Gastrocnemius medialis (tissue), 4 donors: ENCODE measurements at regions of chr19 and their contacts with region 1.

Region 1: GRCh38 chr19:32971715-32972540 is at the starts of genes CEP89 and FAAP24:
- DNase-seq: peak; percentile 97 to 99
- ATAC-seq: peak; percentile 100
- H3K4me3 ChIP-seq: peak within 1 kb of the TSS; percentile 65 to 96 (median 84)
- H3K27ac ChIP-seq: peak within 1 kb of the TSS; percentile 67 to 82 (median 75)
- H3K4me1 ChIP-seq: peaks cover 8 to 13% of the 10 kb centered on the region in 2 donors
- H3K27me3 ChIP-seq: no peaks in the 10 kb centered on the region
- CTCF ChIP-seq: no peak
- POLR2A ChIP-seq: no peak
- total RNA-seq, gene CEP89: 3.4 to 20.9 (median 9.5) TPM
- total RNA-seq, gene FAAP24: 0.16 to 0.97 TPM in 2 of 4 donors, not detected in the others

Region 2: DNA sequence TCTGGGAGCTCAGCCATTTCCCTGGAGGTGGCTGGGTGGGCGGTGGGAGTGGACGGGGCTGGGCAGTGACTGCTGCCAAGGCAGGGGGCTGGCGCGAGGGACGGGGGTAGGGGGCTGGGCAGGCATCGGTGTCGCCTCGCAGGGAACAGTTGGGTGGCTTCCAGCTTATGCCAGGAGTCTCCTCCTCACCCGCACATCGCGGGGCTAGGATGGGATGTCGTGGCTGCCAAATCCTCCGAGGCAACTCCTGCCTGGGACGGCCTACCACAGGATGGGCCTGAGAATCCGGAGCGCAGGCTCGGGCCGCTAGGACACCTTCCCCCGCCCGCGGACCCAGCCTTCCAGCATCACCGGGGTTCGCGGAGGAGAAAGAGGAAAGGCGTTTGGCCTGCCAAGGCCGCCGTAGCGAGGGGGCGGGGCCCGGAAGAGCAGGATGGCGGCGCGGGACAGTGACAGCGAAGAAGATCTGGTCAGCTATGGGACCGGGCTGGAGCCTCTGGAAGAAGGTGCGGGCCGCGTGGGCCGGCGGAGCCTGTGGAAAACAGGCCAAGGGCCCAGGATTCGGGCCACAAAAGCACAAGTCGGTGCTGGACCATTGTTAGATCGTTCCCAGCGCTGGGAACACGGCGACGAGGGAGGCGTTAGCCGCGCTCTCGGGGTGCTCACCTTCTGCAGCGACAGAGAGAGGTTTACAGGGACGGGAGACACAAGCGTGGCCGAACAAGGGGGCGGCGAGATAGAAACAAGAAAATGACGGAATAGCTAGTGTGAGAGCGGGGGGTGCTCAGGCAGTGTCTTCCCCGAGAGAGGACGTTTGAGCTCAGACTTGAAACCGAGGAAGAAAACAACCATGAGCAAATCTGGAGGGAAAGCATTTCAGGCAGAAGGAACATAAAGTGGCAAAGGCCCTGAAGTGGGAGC is 109.1 kb after region 1 on chr19 and contains the start of gene GPATCH1:
- in situ Hi-C with region 1: no loop called
- intact Hi-C with region 1: loop called (anchors 5 kb)
- DNase-seq: peak; percentile 68 to 78
- ATAC-seq: peak; percentile 88 to 96
- H3K4me3 ChIP-seq: peak within 1 kb of the TSS; percentile 82 to 97 (median 96)
- H3K27ac ChIP-seq: peak within 1 kb of the TSS; percentile 82 to 90 (median 86)
- H3K4me1 ChIP-seq: peaks cover 15 to 16% of the 10 kb centered on the region in 2 donors
- H3K27me3 ChIP-seq: no peaks in the 10 kb centered on the region
- CTCF ChIP-seq: no peak
- POLR2A ChIP-seq: peak in 1 of 2 donors; percentile 33
- total RNA-seq, gene GPATCH1: 2.2 to 5.3 (median 4.6) TPM

Region 3: DNA sequence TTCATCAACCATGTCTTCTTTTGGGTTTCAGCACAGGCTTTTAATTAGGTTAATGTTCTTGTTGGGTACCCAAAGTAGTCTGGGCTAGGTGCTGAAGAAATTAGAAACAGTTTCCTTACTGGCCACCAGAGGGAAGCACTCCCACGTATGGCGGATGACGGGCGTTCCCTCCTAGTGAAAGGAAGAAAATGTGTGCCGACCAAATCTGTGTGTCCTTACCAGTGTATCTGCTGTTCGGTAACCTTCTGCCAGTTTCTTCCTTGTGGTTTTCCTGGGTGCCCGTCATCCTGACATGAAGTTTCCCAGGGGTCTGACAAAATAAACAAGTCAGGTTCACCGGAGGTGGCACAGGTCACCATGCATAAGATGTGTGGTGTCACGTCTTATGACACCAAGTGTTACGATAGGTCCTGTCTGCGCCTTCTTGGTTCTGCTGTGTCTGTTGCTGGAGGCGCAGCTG is 154.0 kb after region 1 on chr19:
- in situ Hi-C with region 1: loop called in 1 of 4 experiments (anchors 10 kb)
- intact Hi-C with region 1: no loop called
- DNase-seq: peak; percentile 16 to 23
- ATAC-seq: peak; percentile 42 to 73
- H3K4me3 ChIP-seq: no peak overlapping the region
- H3K27ac ChIP-seq: no peak overlapping the region
- H3K4me1 ChIP-seq: no peaks in the 10 kb centered on the region
- H3K27me3 ChIP-seq: no peaks in the 10 kb centered on the region
- CTCF ChIP-seq: peak; percentile 46 to 81 (median 64)
- POLR2A ChIP-seq: no peak